ENCODE measurements at regions of chr5 and their contacts with region 1.

Region 1: GRCh38 chr5:14142827-14143548 is at the start of gene TRIO:
- DNase-seq: peak; percentile 79
- H3K4me3 Mint-ChIP-seq: peak within 1 kb of the TSS; percentile 78
- H3K27ac Mint-ChIP-seq: no peak within 1 kb of the TSS
- H3K4me1 Mint-ChIP-seq: peaks cover 11% of the 10 kb centered on the region
- H3K27me3 Mint-ChIP-seq: peaks cover 54% of the 10 kb centered on the region
- total RNA-seq, gene TRIO: 3.6 to 4.6 TPM

Region 2: DNA sequence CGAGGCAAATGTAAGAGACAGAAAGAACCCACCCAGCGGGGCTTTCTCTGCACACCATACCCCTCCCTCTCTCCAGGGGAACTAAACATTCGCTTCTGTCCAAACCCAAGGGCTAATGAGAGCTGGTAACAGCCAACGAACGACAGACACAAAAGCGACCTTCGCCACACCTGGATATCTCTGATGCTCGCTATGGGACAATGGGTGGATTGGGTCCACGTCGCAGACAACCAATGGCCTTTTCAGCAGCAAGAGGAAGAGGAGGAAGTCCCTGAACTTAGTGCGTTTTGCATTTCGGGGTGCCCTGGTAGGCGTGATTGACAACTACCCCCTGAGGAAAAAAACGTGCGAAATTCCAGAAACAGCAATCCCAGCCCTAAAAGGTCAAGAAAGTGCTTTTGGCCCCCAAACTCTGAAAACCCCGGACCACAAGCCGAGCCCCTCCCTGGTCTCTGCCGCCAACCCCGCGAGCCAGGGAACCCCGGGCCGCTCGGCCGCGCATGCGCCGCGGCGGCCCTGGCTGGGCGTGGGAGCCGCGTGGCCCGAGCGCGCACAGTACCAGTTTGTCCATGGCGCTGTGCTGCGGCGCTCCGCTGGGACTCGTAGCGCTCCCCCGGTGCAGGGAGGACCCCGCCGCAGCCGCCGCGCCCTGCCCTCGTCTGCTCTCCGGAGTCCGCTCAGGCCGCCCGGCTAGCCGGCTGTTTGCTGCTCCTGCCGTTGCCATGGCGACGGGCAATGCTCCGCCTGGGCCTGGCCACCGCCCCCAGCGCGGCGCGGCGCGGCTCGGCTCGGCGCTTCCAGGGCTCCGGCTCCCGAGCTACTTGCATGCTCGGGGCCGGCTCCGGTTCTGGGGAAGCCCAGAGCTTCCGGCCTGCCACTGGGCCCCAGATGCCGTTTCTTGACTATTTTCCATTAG is 131.6 kb before region 1 on chr5:
- CTCF ChIA-PET with region 1: no interaction called
- intact Hi-C with region 1: loop called (anchors 5 kb)
- DNase-seq: peak; percentile 37
- H3K4me3 Mint-ChIP-seq: peak overlapping the region; percentile 69
- H3K27ac Mint-ChIP-seq: no peak overlapping the region
- H3K4me1 Mint-ChIP-seq: peaks cover 9% of the 10 kb centered on the region
- H3K27me3 Mint-ChIP-seq: peaks cover 34% of the 10 kb centered on the region

Region 3: DNA sequence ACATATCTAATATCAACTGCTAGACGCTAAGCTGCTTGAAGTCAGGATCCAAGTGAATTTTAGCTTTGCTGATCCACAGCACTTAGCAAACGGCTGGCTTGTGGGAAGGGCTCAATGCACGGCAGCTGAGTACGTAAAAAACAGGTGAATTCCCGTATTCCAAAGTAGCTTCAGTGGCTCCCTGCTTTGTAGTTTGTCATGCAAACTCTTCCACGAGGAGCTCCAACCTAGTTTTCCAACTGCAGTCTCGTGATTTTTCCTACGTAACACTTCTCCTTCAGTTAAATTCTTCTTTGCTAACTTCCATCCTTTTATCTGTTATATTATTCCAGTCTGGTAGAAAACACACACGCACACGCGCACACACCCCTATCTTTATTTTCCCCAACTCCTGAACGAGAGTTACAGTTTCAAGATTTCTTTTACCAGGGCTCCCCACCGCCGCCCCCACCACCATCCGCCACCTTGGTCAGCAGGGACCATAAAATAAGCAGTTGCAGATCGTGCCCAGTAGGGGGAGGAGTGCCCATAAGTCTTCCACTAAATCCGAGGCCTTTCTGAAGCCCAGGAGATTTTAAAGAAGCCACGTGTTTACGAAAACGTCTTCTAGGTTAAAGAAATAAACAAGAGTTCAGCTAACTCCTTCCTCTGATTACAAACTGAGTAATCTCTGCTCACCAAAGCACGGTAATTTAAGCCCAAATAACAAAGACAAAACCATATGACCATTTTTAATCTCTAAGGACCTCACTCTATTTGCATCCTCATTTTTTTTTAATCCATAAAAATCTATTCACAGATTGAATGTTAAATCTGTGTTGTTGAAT is 34.6 kb before region 1 on chr5:
- CTCF ChIA-PET with region 1: no interaction called
- intact Hi-C with region 1: loop called (anchors 1 kb)
- DNase-seq: peak; percentile 30
- H3K4me3 Mint-ChIP-seq: no peak overlapping the region
- H3K27ac Mint-ChIP-seq: no peak overlapping the region
- H3K4me1 Mint-ChIP-seq: peaks cover 10% of the 10 kb centered on the region
- H3K27me3 Mint-ChIP-seq: peaks cover 24% of the 10 kb centered on the region

Region 4: GRCh38 chr5:14264604-14265316 is 121.8 kb after region 1 on chr5:
- CTCF ChIA-PET with region 1: no interaction called
- intact Hi-C with region 1: loop called (anchors 1 kb)
- DNase-seq: peak; percentile 85
- H3K4me3 Mint-ChIP-seq: peak overlapping the region; percentile 52
- H3K27ac Mint-ChIP-seq: no peak overlapping the region
- H3K4me1 Mint-ChIP-seq: peaks cover 10% of the 10 kb centered on the region
- H3K27me3 Mint-ChIP-seq: peaks cover 32% of the 10 kb centered on the region

Region 5: DNA sequence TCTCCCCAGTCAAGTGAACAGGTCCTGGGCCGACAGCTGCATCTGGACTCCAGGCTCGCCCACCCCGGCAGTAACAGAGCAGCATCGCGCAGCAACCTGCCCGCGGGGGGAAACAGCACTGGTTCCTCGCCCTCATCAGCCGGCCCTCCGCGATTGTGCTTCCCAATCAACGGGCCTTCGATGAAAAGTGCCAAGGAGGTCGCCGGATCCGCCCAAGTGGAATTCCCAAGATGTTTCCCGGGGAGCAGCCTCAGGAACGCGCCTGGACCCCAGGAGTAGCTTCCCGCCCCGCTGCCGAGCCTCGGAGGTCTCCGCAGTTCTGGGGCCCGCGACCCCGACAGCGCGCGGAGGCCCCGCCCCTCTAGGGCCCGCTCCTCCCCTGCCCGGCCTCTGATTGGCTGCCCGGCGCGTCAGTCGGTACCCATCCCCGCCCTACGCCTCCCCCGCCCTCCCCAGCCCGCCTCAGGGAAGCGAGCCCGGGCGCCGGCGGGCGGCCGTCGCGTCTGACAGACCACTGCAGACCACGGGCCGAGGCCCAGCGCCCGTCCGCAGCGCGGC is 438.4 kb after region 1 on chr5 and contains the start of gene OTULINL:
- CTCF ChIA-PET with region 1: no interaction called
- intact Hi-C with region 1: loop called (anchors 2 kb)
- DNase-seq: peak; percentile 91
- H3K4me3 Mint-ChIP-seq: peak within 1 kb of the TSS; percentile 75
- H3K27ac Mint-ChIP-seq: peak within 1 kb of the TSS; percentile 70
- H3K4me1 Mint-ChIP-seq: peaks cover 26% of the 10 kb centered on the region
- H3K27me3 Mint-ChIP-seq: peaks cover 2% of the 10 kb centered on the region
- total RNA-seq, gene OTULINL: 9.1 to 10.6 TPM

Region 6: GRCh38 chr5:14706615-14707021 is 563.6 kb after region 1 on chr5:
- CTCF ChIA-PET with region 1: no interaction called
- intact Hi-C with region 1: loop called (anchors 1 kb)
- DNase-seq: peak; percentile 46
- H3K4me3 Mint-ChIP-seq: peak overlapping the region; percentile 18
- H3K27ac Mint-ChIP-seq: peak overlapping the region; percentile 94
- H3K4me1 Mint-ChIP-seq: peaks cover 75% of the 10 kb centered on the region
- H3K27me3 Mint-ChIP-seq: no peaks in the 10 kb centered on the region